ENCODE measurements at regions of chr17 and their contacts with region 1.

Region 1: GRCh38 chr17:80706463-80706867 is 161.8 kb downstream of the RPTOR start:
- DNase-seq: no peak
- H3K4me3 ChIP-seq: no peak overlapping the region
- H3K27ac ChIP-seq: no peak overlapping the region
- H3K4me1 ChIP-seq: peaks cover 0 to 8% (median 0%) of the 10 kb centered on the region in 4 donors
- H3K27me3 ChIP-seq: no peaks in the 10 kb centered on the region
- CTCF ChIP-seq: no peak
- EP300 ChIP-seq: no peak
- POLR2A ChIP-seq: no peak

Region 2: GRCh38 chr17:80219013-80219762 is 487.3 kb before region 1 on chr17:
- in situ Hi-C with region 1: no loop called
- intact Hi-C with region 1: no loop called
- DNase-seq: peak; percentile 87
- H3K4me3 ChIP-seq: peak overlapping the region in 3 of 4 donors; percentile 88 to 94 (median 88)
- H3K27ac ChIP-seq: peak overlapping the region; percentile 87 to 91 (median 88)
- H3K4me1 ChIP-seq: peaks cover 3 to 27% (median 20%) of the 10 kb centered on the region in 4 donors
- H3K27me3 ChIP-seq: no peaks in the 10 kb centered on the region
- CTCF ChIP-seq: no peak
- EP300 ChIP-seq: no peak
- POLR2A ChIP-seq: no peak

Region 3: GRCh38 chr17:80908776-80909175 is 202.3 kb after region 1 on chr17:
- in situ Hi-C with region 1: no loop called
- intact Hi-C with region 1: loop called (anchors 5 kb)
- DNase-seq: no peak
- H3K4me3 ChIP-seq: no peak overlapping the region
- H3K27ac ChIP-seq: no peak overlapping the region
- H3K4me1 ChIP-seq: no peaks in the 10 kb centered on the region
- H3K27me3 ChIP-seq: no peaks in the 10 kb centered on the region
- CTCF ChIP-seq: no peak
- EP300 ChIP-seq: no peak
- POLR2A ChIP-seq: no peak

Measured in transverse colon (tissue), 4 donors.